ENCODE measurements at regions of chr12 and their contacts with region 1.

Region 1: GRCh38 chr12:105420659-105421240 is 90.3 kb downstream of the C12orf75 start:
- DNase-seq: peak; percentile 26 to 71 (median 44)
- ATAC-seq: peak; percentile 55
- H3K4me3 ChIP-seq: no peak overlapping the region
- H3K4me3 Mint-ChIP-seq: no peak overlapping the region
- H3K27ac ChIP-seq: no peak overlapping the region
- H3K27ac Mint-ChIP-seq: no peak overlapping the region
- H3K4me1 ChIP-seq: no peaks in the 10 kb centered on the region
- H3K4me1 Mint-ChIP-seq: no peaks in the 10 kb centered on the region
- H3K27me3 ChIP-seq: no peaks in the 10 kb centered on the region
- H3K27me3 Mint-ChIP-seq: peaks cover under 1% of the 10 kb centered on the region
- CTCF ChIP-seq: peak; percentile 88

Region 2: GRCh38 chr12:105341010-105341409 is 79.7 kb before region 1 on chr12:
- CTCF ChIA-PET with region 1: no interaction called
- POLR2A ChIA-PET with region 1: no interaction called
- intact Hi-C with region 1: no loop called
- DNase-seq: no peak
- ATAC-seq: no peak
- H3K4me3 ChIP-seq: no peak overlapping the region
- H3K4me3 Mint-ChIP-seq: no peak overlapping the region
- H3K27ac ChIP-seq: no peak overlapping the region
- H3K27ac Mint-ChIP-seq: no peak overlapping the region
- H3K4me1 ChIP-seq: peaks cover 5% of the 10 kb centered on the region
- H3K4me1 Mint-ChIP-seq: peaks cover 10% of the 10 kb centered on the region
- H3K27me3 ChIP-seq: no peaks in the 10 kb centered on the region
- H3K27me3 Mint-ChIP-seq: no peaks in the 10 kb centered on the region
- CTCF ChIP-seq: no peak

Region 3: DNA sequence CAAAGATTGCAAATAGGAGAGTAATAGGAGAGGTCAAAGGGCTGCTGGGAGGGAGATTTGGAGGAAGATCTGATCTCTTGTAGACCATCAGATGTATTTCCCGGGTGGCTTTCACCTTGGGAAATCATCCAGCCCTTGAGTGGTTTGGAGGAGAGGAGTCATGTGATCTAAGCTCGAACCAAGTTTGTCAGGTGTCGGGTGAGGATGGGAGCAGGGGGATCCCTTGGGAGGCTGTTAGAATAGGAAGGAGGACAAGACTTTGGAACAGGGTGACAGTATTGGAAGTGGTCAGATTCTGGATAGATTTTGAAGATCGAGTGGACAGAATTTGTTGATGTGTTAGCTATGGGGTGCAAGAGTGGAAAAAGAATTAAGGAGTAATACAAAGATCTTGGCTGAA is 43.7 kb before region 1 on chr12:
- CTCF ChIA-PET with region 1: no interaction called
- POLR2A ChIA-PET with region 1: no interaction called
- intact Hi-C with region 1: no loop called
- DNase-seq: no peak
- ATAC-seq: no peak
- H3K4me3 ChIP-seq: no peak overlapping the region
- H3K4me3 Mint-ChIP-seq: no peak overlapping the region
- H3K27ac ChIP-seq: no peak overlapping the region
- H3K27ac Mint-ChIP-seq: no peak overlapping the region
- H3K4me1 ChIP-seq: no peaks in the 10 kb centered on the region
- H3K4me1 Mint-ChIP-seq: no peaks in the 10 kb centered on the region
- H3K27me3 ChIP-seq: no peaks in the 10 kb centered on the region
- H3K27me3 Mint-ChIP-seq: no peaks in the 10 kb centered on the region
- CTCF ChIP-seq: no peak

Region 4: GRCh38 chr12:106136263-106136662 is 715.5 kb after region 1 on chr12:
- CTCF ChIA-PET with region 1: interaction called, 3 read pairs
- POLR2A ChIA-PET with region 1: no interaction called
- intact Hi-C with region 1: loop called (anchors 1 kb)
- DNase-seq: peak; percentile 44 to 78 (median 62)
- ATAC-seq: no peak
- H3K4me3 ChIP-seq: no peak overlapping the region
- H3K4me3 Mint-ChIP-seq: peak overlapping the region; percentile 46
- H3K27ac ChIP-seq: no peak overlapping the region
- H3K27ac Mint-ChIP-seq: no peak overlapping the region
- H3K4me1 ChIP-seq: peaks cover 21% of the 10 kb centered on the region
- H3K4me1 Mint-ChIP-seq: peaks cover 14% of the 10 kb centered on the region
- H3K27me3 ChIP-seq: peaks cover 39 to 62% of the 10 kb centered on the region in 2 experiments
- H3K27me3 Mint-ChIP-seq: peaks cover 84% of the 10 kb centered on the region
- CTCF ChIP-seq: peak; percentile 83